ENCODE measurements at regions of chr12 and their contacts with region 1.

Region 1: GRCh38 chr12:100404769-100405407 is 48.0 kb downstream of the SLC17A8 start:
- DNase-seq: peak; percentile 87
- ATAC-seq: peak; percentile 98
- H3K4me3 Mint-ChIP-seq: no peak overlapping the region
- H3K27ac Mint-ChIP-seq: no peak overlapping the region
- H3K4me1 Mint-ChIP-seq: peaks cover 17% of the 10 kb centered on the region
- H3K27me3 Mint-ChIP-seq: no peaks in the 10 kb centered on the region
- CTCF ChIP-seq: peak; percentile 77

Region 2: GRCh38 chr12:100234598-100235304 is 170.1 kb before region 1 on chr12:
- CTCF ChIA-PET with region 1: interaction called, 15 read pairs
- POLR2A ChIA-PET with region 1: no interaction called
- DNase-seq: no peak
- ATAC-seq: 0 out of 2 replicates have a peak, but pooled peaks have one; percentile 38
- H3K4me3 Mint-ChIP-seq: no peak overlapping the region
- H3K27ac Mint-ChIP-seq: no peak overlapping the region
- H3K4me1 Mint-ChIP-seq: peaks cover 5% of the 10 kb centered on the region
- H3K27me3 Mint-ChIP-seq: no peaks in the 10 kb centered on the region
- CTCF ChIP-seq: 0 out of 2 replicates have a peak, but pooled peaks have one; percentile 30

Region 3: GRCh38 chr12:100365411-100365810 is 39.5 kb before region 1 on chr12:
- CTCF ChIA-PET with region 1: interaction called, 104 read pairs
- POLR2A ChIA-PET with region 1: no interaction called
- DNase-seq: no peak
- ATAC-seq: no peak
- H3K4me3 Mint-ChIP-seq: no peak overlapping the region
- H3K27ac Mint-ChIP-seq: no peak overlapping the region
- H3K4me1 Mint-ChIP-seq: peaks cover 10% of the 10 kb centered on the region
- H3K27me3 Mint-ChIP-seq: peaks cover 5% of the 10 kb centered on the region
- CTCF ChIP-seq: no peak

Region 4: GRCh38 chr12:100391856-100392255 is 13.0 kb before region 1 on chr12:
- CTCF ChIA-PET with region 1: interaction called, 28 read pairs
- POLR2A ChIA-PET with region 1: no interaction called
- DNase-seq: no peak
- ATAC-seq: no peak
- H3K4me3 Mint-ChIP-seq: no peak overlapping the region
- H3K27ac Mint-ChIP-seq: no peak overlapping the region
- H3K4me1 Mint-ChIP-seq: no peaks in the 10 kb centered on the region
- H3K27me3 Mint-ChIP-seq: no peaks in the 10 kb centered on the region
- CTCF ChIP-seq: no peak

Region 5: DNA sequence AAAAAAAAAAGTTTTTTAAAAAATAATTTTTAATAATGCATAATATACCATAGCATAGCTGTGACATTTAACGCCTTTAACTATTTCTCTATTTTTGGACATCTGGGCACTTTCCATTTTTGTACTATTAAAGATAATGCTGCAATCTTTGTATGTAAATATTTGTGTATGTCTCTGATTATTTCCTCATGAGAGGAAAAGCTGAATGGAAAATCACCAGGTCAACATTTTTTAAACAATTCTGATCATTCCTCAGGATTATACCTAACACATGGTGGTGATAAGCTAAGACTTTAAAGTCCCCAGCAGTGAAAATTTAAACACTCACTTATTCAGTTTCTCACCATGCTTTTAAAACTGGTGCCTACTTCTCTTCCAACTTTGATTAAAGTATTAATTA is 37.5 kb after region 1 on chr12:
- CTCF ChIA-PET with region 1: interaction called, 23 read pairs
- POLR2A ChIA-PET with region 1: no interaction called
- DNase-seq: no peak
- ATAC-seq: no peak
- H3K4me3 Mint-ChIP-seq: no peak overlapping the region
- H3K27ac Mint-ChIP-seq: no peak overlapping the region
- H3K4me1 Mint-ChIP-seq: peaks cover 12% of the 10 kb centered on the region
- H3K27me3 Mint-ChIP-seq: no peaks in the 10 kb centered on the region
- CTCF ChIP-seq: no peak

Region 6: DNA sequence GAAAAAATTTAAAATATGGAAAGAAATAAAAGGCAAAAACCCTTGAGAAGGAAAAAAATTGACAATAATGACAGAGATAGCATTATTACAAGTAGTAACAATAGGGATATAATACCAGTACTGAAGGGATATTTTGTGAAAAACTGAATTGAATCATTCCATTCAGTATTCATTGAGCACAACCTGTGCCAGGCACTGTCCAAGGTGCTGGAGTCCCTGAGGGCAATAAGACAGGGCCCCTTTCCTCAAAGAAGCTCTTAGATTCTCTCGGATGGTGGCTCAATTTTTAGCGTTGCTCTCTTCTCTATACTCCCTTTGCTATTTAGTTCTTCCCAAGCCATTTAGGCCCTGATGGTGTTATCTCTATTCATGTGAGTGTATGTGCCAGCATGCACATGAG is 134.3 kb after region 1 on chr12:
- CTCF ChIA-PET with region 1: interaction called, 21 read pairs
- POLR2A ChIA-PET with region 1: no interaction called
- DNase-seq: peak; percentile 68
- ATAC-seq: peak; percentile 84
- H3K4me3 Mint-ChIP-seq: no peak overlapping the region
- H3K27ac Mint-ChIP-seq: no peak overlapping the region
- H3K4me1 Mint-ChIP-seq: no peaks in the 10 kb centered on the region
- H3K27me3 Mint-ChIP-seq: no peaks in the 10 kb centered on the region
- CTCF ChIP-seq: no peak

Region 7: GRCh38 chr12:100573292-100574186 is 168.7 kb after region 1 on chr12 and contains the start of gene GAS2L3:
- CTCF ChIA-PET with region 1: interaction called, 13 read pairs
- POLR2A ChIA-PET with region 1: interaction called, 8 read pairs
- DNase-seq: peak; percentile 92
- ATAC-seq: peak; percentile 91
- H3K4me3 Mint-ChIP-seq: peak within 1 kb of the TSS; percentile 95
- H3K27ac Mint-ChIP-seq: peak within 1 kb of the TSS; percentile 97
- H3K4me1 Mint-ChIP-seq: peaks cover 18% of the 10 kb centered on the region
- H3K27me3 Mint-ChIP-seq: peaks cover 31% of the 10 kb centered on the region
- CTCF ChIP-seq: no peak
- total RNA-seq, gene GAS2L3: 14.8 to 20.1 TPM (median 17.3 TPM) in 3 replicates

Region 8: GRCh38 chr12:100778967-100779590 is 374.2 kb after region 1 on chr12:
- CTCF ChIA-PET with region 1: no interaction called
- POLR2A ChIA-PET with region 1: no interaction called
- DNase-seq: no peak
- ATAC-seq: peak; percentile 74
- H3K4me3 Mint-ChIP-seq: no peak overlapping the region
- H3K27ac Mint-ChIP-seq: peak overlapping the region; percentile 29; the same call in 1 of the 2 replicates
- H3K4me1 Mint-ChIP-seq: peaks cover 22% of the 10 kb centered on the region
- H3K27me3 Mint-ChIP-seq: no peaks in the 10 kb centered on the region
- CTCF ChIP-seq: no peak

Measured in WTC11 (cell line).